Heart left ventricle (tissue), 16 donors: ENCODE measurements at regions of chr5 and their contacts with region 1.

Region 1: GRCh38 chr5:114223866-114224265 is 138.0 kb upstream of the KCNN2 start:
- DNase-seq: no peak
- ATAC-seq: no peak
- H3K4me3 ChIP-seq: no peak overlapping the region
- H3K27ac ChIP-seq: no peak overlapping the region
- H3K4me1 ChIP-seq: no peaks in the 10 kb centered on the region
- H3K27me3 ChIP-seq: no peaks in the 10 kb centered on the region
- CTCF ChIP-seq: peak in 10 of 12 donors; percentile 17 to 51 (median 38)
- POLR2A ChIP-seq: no peak

Region 2: DNA sequence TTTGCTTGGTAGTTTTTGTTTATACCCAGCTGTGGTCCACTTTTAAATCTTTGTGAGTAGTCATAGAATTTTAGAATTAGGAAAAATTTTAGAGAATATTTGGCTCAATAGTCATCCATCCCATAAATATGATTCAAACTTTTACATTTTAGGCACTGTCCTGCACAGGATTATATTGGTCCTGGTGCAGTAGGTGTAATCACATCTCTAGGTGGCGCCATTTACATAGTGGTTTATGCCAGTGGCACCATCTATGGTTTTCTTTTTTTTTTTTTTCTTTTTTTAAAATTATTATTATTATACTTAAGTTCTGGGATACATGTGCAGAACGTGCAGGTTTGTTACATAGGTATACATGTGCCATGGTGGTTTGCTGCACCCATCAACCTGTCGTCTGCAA is 122.7 kb before region 1 on chr5:
- intact Hi-C with region 1: loop called in 2 of 10 experiments (anchors 5 kb)
- DNase-seq: peak in 1 of 5 donors; percentile 18
- ATAC-seq: peak in 2 of 4 donors; percentile 62 to 63
- H3K4me3 ChIP-seq: no peak overlapping the region
- H3K27ac ChIP-seq: no peak overlapping the region
- H3K4me1 ChIP-seq: no peaks in the 10 kb centered on the region
- H3K27me3 ChIP-seq: no peaks in the 10 kb centered on the region
- CTCF ChIP-seq: peak; percentile 44 to 76 (median 66)
- POLR2A ChIP-seq: no peak

Region 3: GRCh38 chr5:114118511-114118910 is 105.4 kb before region 1 on chr5:
- intact Hi-C with region 1: loop called in 3 of 10 experiments (anchors 10 kb)
- DNase-seq: no peak
- ATAC-seq: no peak
- H3K4me3 ChIP-seq: no peak overlapping the region
- H3K27ac ChIP-seq: no peak overlapping the region
- H3K4me1 ChIP-seq: peaks cover 0 to 7% (median 0%) of the 10 kb centered on the region in 12 donors
- H3K27me3 ChIP-seq: no peaks in the 10 kb centered on the region
- CTCF ChIP-seq: no peak
- POLR2A ChIP-seq: no peak

Region 4: DNA sequence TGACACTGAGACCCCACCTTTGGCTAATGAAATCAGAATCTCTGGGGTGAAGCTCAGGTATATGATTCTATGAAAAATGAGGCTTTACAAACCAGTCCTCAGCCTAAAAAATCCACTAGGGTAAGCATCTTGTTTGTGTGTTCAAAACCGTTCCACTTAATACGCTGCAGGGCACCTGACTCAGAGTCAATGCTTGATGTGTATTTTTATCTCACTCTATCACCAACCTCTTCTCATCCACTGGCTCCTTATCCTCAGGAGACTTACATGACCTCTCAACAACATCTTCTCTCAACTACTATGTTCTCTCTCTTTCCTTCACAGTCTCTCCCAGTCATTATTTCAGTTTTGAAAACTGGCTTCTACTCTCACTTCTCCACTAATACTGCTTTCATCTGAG is 15.3 kb before region 1 on chr5:
- intact Hi-C with region 1: loop called in 1 of 10 experiments (anchors 2 kb)
- DNase-seq: no peak
- ATAC-seq: peak in 3 of 4 donors; percentile 41 to 46 (median 42)
- H3K4me3 ChIP-seq: no peak overlapping the region
- H3K27ac ChIP-seq: no peak overlapping the region
- H3K4me1 ChIP-seq: peaks cover 0 to 6% (median 0%) of the 10 kb centered on the region in 12 donors
- H3K27me3 ChIP-seq: no peaks in the 10 kb centered on the region
- CTCF ChIP-seq: no peak
- POLR2A ChIP-seq: no peak

Region 5: GRCh38 chr5:114634967-114635901 is 411.4 kb after region 1 on chr5:
- intact Hi-C with region 1: no loop called
- DNase-seq: no peak
- ATAC-seq: no peak
- H3K4me3 ChIP-seq: no peak overlapping the region
- H3K27ac ChIP-seq: no peak overlapping the region
- H3K4me1 ChIP-seq: no peaks in the 10 kb centered on the region
- H3K27me3 ChIP-seq: no peaks in the 10 kb centered on the region
- CTCF ChIP-seq: no peak
- POLR2A ChIP-seq: no peak